Posterior vena cava (tissue), 2 donors: ENCODE measurements at regions of chrX and their contacts with region 1.

Region 1: GRCh38 chrX:15854712-15855567 is at the start of gene AP1S2:
- DNase-seq: peak; percentile 98
- total RNA-seq, gene AP1S2: 47.0 to 74.7 TPM

Region 2: DNA sequence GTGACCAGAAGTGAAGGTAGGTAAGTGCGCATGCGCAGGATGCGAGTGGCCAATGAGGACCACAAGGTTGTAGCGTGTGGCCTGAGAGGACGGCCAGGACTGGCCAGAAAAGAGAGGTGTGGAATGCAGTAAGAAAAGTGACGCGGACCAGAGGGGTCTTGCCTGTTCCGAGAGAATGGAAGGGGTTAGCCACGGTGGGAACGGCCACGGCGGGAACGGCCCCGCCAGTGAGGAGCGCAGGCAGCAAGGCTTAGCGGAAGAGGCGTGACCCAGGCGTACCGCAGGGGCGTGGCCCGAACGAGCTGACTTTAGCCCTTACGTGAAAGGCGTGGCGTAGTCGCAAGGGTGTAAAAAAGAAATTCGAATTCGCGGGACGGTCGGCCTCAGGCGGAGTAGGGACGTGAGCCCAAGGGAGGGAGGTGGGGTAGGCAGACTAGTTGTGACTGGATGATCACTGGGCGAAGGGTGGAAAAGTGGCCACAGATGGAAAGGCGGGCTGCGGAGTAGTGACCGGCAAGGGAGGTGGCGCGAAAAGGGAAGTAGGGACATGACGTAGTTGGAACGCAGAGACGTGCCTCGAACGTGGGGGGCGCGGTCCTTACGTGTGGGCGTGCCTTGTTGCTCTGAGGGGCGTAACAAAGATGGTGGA is 180.0 kb before region 1 on chrX:
- intact Hi-C with region 1: loop called in 1 of 2 experiments (anchors 10 kb)
- DNase-seq: peak; percentile 99

Region 3: GRCh38 chrX:17098516-17099247 is 1243.7 kb after region 1 on chrX:
- intact Hi-C with region 1: no loop called
- DNase-seq: no peak